AG04449 (cell line): ENCODE measurements at regions of chr2 and their contacts with region 1.

Region 1: GRCh38 chr2:102166189-102166845 is 20.5 kb upstream of the IL1RL2 start:
- DNase-seq: peak; percentile 42
- H3K4me3 ChIP-seq: no peak overlapping the region
- CTCF ChIP-seq: peak; percentile 56

Region 2: GRCh38 chr2:101883863-101884262 is 282.5 kb before region 1 on chr2:
- CTCF ChIA-PET with region 1: interaction called, 28 read pairs
- POLR2A ChIA-PET with region 1: interaction called, 3 read pairs
- DNase-seq: no peak
- H3K4me3 ChIP-seq: no peak overlapping the region
- CTCF ChIP-seq: peak; percentile 49

Region 3: DNA sequence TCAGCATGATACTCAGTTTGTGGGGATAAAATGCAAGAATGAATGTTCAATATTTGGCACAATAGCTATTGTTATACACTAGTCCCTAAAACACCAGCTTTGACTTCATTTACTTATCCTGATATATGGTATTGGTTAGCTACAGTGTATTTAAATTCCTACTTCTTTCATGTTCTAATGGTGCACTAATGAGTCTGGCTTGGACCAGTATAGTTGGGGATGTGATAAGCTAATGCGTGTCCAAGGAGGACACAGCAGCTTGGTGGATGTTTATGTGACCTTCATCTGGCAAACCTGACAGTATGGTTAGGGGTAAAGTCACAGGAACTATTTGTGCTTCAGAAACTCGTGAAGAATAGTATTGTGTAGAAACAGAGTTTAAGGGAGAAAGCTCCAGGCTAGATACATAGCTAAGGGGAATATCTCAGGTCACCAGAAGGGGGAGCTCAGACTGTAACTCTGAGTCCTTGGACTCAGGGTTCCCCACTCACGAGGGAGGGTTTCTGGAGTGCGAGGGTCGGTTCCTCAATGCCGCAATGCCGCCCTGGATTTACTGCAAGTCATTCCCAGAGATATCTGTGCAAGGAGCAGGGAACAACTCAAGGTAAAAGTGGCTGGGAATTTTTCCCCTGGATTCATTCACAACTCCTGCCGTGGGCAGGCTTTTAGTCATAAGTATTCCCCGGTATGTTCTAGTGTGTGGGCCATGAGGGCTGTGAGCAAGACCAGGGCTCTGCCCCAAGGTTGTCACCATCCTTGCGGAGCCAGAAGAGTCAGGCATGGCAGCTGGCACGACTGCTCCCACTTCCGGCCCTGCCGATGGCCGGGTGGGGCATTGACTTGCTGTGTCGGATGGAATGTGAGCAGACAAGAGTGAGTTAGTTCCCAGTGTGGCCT is 160.1 kb before region 1 on chr2:
- CTCF ChIA-PET with region 1: interaction called, 70 read pairs
- POLR2A ChIA-PET with region 1: no interaction called
- DNase-seq: no peak
- H3K4me3 ChIP-seq: no peak overlapping the region
- CTCF ChIP-seq: peak; percentile 64

Region 4: DNA sequence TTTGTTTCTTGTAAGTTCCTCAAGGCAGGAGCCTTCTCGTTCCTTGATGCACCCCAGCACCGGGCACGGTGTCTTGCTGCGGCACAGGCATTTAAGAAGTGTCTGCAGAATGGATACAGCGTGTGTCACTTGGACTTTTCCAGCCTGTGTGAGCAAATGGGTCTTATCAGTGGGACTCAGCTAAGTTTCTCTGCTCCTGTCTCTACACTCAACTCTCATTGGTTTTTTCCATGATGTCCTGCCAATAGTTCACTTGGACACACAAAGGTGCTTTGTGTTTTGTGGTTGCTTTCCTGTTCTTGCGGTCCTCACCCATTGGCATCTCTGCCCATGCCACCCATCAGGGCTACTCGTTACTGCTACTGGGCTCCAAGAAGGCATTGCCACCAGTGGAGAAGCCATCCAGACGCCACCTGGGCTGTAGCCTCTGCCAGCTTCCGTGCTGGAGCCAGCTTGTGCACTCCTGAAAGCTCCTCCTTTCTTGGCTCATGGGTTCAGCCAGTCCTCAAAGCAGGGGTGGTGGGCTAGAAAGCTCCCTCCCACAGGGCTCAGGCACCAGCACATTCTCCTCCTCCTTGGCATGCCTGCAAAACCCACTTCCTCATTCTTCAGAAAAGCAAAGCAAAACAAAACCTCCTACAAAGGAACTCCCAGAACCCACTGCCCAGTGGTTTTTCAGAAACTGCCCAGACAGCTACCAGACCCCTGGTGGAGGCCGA is 133.1 kb before region 1 on chr2:
- CTCF ChIA-PET with region 1: interaction called, 25 read pairs
- POLR2A ChIA-PET with region 1: no interaction called
- DNase-seq: no peak
- H3K4me3 ChIP-seq: no peak overlapping the region
- CTCF ChIP-seq: no peak

Region 5: GRCh38 chr2:102155642-102156491 is 10.4 kb before region 1 on chr2:
- CTCF ChIA-PET with region 1: interaction called, 62 read pairs
- POLR2A ChIA-PET with region 1: no interaction called
- DNase-seq: no peak
- H3K4me3 ChIP-seq: no peak overlapping the region
- CTCF ChIP-seq: no peak